HEK293T (cell line): ENCODE measurements at regions of chr6 and their contacts with region 1.

Region 1: DNA sequence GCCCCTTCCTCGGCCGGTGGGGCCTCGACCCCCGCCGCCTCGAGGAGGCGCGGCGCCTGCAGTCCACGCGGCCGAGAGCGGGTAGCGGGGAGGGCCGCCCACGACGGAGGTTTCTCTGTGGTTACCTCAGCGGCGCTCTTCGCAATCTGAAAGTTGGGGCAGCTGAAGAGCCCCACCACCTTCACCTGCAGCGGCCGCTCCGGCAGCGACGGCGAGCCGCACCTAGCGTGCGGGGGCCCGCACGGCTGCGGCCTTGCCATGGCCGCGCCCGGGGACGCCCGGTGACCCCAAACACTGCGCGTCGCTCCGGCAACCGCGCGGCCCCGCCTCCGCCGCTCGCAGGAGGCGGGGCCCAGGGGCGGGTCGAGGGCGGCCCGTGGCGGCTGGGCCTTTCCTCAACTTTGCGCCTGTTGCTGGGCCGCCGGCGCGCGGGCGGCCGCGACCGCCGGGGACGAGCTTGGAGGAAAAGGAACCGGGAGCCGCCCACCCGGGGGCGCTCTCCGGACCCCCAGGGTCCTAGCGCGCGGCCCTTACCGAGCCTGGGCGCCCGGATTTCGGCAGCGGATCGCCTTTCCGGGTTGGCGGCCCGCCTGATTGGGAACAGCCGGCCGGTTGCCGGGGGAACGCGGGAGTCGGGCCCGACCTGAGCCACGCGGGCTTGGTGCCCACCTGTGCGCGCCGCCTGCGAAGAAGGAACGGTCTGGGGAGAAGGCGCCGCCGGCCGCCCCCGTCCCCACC is at the starts of genes PPIL6 and SMPD2:
- DNase-seq: peak; percentile 92

Region 2: GRCh38 chr6:109420796-109421583 is 19.5 kb before region 1 on chr6:
- CTCF ChIA-PET with region 1: no interaction called
- POLR2A ChIA-PET with region 1: no interaction called
- DNase-seq: no peak

Region 3: DNA sequence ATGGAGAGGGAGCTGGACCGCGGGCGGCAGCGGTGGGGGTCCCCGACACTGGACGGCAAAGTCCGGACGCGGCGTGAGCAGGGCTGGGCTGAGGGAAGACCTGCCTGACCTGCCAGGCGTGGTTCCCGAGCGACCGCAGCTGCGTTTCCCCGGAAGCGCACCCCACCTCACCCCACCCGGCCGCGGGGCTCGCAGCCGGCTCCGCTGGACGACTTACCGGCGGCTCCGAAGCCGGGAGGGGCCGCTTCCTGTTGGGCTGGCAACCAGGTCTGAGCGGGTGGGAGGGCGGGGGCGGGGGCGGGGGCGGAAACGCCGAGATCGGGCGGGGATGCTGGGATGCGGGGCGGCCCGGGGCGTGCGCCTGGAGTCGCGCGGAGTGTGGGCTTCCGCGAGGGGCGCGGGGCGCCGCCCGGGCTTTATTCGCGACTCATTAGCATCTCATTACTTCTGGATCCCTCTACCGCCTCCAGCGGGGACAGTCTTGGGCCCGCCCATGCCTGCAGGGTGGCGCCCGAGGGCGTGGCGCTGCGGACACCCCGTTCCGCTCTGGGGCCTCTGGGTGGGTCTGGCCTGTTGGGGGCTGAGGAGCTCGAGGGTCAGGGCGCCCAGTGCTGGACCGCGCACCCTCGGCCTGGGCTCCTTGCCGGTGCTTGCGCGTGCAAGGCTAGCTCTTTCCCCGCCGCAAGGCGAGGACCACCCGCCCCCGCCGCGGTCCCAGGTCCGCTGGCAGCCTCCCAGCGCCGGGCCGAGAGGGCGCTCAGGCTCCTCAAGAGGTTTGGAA is 15.2 kb after region 1 on chr6 and contains the start of gene MICAL1:
- CTCF ChIA-PET with region 1: interaction called, 5 read pairs
- POLR2A ChIA-PET with region 1: interaction called, 39 read pairs
- DNase-seq: peak; percentile 58